Posterior cingulate gyrus (tissue), 11 donors: ENCODE measurements at regions of chr13 and their contacts with region 1.

Region 1: DNA sequence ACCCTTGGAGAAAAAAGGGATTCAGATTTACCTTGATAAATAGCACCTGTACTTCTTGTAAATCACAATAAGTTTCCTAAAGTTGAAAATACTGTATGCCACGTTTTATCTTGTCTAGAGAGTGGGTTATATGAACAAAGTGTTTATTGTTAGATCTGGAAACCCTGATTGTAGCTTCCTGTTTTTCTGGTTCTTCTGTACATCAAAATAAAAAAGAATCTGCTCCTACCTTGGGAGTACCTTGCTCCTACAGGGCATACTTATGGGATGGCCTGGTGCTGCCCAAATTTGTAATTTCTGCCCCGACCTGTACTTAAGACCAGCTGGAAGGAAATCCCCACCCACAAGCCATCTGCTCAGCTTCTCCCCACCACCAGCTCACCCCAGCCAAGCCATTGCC is 241.1 kb downstream of the SLC7A1 start:
- DNase-seq: no peak

Region 2: GRCh38 chr13:29210676-29211075 is 143.7 kb before region 1 on chr13:
- intact Hi-C with region 1: loop called (anchors 5 kb)
- DNase-seq: peak in 1 of 10 donors; percentile 17